ENCODE measurements at regions of chr12 and their contacts with region 1.

Region 1: DNA sequence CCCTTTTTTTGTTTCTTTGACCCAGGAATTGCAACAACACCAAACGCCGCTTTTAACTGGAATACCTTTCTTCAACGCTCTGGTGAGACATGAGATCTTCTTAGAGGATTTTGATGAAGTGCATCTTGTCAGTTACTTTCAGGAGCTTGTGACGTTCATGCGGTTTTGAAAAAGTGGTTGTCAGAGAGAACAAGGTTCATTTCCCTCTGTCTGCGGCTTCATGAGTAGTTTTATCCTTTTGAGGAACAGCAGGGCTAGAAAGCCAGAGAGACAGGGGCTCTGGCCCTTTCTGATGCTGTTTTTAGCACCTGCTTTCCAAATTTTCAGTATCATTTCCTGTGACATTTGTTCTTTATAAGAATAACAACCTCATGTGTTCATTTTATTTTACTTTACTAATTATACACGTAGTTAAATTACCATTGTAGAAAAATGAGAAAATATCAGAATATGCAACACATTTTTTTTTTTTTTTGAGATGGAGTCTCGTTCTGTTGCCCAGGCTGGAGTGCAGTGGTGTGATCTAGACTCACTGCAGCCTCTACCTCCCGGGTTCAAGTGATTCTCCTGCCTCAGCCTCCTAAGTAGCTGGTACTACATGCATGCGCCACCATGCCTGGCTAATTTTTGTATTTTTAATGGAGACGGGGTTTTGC is 61.8 kb downstream of the GLT1D1 start:
- DNase-seq: peak; percentile 91
- H3K4me3 Mint-ChIP-seq: peak overlapping the region; percentile 48
- H3K27ac Mint-ChIP-seq: peak overlapping the region; percentile 73
- H3K4me1 Mint-ChIP-seq: peaks cover 43% of the 10 kb centered on the region
- H3K27me3 Mint-ChIP-seq: no peaks in the 10 kb centered on the region

Region 2: DNA sequence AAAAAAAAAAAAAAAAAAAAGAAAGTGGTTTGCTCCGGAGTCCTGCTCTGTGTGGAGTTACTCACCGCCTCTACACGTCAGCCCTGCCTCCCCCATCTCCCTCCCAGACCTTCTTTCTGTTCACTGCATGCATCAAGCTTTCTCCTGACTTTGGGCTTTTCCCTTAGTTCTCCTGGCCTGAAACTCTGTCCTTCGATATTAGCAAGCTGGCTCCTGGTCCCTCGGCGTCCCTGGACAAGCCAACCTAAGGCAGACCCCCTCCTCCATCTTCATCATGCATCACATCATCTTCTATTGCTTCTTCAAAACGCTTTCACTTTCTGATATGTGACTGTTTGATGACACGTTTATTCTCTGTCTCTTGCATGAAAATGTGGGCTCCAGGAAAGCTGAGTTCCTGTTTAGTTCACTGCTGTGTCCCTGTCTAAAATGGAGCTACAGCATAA is 131.9 kb before region 1 on chr12:
- intact Hi-C with region 1: loop called (anchors 1 kb)
- DNase-seq: peak; percentile 68
- H3K4me3 Mint-ChIP-seq: peak overlapping the region; percentile 53
- H3K27ac Mint-ChIP-seq: peak overlapping the region; percentile 86
- H3K4me1 Mint-ChIP-seq: peaks cover 6% of the 10 kb centered on the region
- H3K27me3 Mint-ChIP-seq: no peaks in the 10 kb centered on the region

Measured in activated CD4-positive, alpha-beta T cell treated with anti-CD3 and anti-CD28 coated beads, Interleukin-2, amount 10 ng/mL, durations not matched to agents 24 days and 14 days (primary cell).